Mucosa of descending colon (tissue), 3 donors: ENCODE measurements at regions of chr6 and their contacts with region 1.

Region 1: DNA sequence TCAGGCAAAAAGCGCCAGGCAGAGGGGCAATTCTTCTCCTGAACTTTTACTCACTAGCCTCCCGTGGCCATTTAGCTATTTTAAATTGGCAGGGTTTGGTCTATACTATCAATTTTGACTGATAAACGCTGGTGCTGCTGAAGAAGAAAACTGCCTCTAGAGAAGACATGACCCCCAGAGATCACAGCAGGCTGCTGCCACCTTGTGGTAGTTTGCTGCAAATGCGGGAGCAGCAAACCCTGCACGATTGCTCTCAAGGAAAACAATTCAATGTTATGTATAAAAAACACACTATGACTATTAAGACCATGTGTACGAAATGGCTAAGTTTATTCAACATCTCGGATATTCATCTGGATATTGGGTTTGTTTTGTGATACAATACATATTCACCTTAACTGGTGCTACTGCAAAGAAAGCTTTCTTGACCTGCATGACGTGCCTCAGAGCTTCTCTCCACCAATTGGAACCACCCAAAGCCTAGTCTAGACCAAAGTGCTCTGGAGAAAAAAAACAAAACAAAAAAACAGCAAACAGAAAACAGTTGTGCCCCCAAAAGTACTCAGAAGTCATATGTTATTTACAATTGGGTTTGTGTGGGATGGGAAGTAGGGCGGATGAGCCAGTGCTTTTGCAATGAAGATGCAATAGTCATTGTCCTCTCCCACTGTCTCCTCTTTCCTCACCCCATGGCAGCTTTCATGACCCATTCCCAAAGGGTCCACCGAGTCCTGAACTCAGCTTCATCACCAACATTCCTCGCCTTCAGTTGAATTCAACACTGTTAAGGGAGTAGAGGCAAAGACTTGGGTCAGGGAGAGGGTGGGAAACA is 19.6 kb upstream of the IL17F start:
- DNase-seq: peak in 2 of 3 donors; percentile 66 to 74
- ATAC-seq: peak; percentile 82
- H3K4me3 ChIP-seq: no peak overlapping the region
- H3K4me1 ChIP-seq: no peaks in the 10 kb centered on the region
- CTCF ChIP-seq: peak; percentile 88

Region 2: DNA sequence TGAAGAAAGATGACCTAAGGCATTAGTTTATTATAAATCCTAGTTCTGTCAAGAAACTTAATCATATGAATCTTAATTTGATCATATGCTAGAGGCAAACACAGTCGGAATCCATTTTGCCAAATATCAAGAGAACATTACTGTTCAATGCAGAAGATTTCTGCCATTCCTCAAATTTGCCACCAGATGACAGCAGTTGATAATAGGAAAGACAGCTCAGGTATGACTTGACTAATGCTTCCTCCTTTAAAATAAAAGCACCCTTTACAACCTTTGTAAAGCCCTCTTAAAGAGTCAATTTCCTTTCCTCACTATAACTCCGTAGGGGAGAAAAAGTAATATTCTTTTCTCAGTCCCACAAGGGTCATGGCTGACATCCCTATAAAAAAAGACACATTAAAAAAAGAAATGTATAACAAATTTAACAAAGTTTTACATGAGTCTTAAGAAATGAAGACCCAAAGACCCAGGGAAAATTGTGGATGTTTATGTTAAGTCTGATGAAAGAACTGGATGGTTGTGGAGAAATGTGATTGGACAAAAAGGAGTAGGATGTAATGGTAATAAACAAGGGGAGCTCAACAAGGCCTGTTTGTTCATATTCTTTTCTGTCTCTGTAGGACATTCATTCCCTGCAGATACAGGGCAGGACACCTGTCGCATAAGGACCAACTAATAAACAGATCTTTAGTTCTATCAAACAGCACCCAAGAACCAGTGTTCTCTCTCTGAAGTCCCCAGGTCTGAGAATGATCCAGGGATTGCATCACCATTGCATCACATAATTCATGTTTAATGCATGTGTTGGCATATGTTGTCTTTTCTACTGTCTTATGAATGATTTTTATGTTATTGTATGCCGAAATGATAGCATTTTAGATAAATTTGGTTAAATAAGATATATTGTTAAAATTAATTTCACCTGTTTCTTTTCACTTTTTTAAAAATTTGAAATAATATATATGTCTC is 100.7 kb before region 1 on chr6:
- intact Hi-C with region 1: loop called in 1 of 2 experiments (anchors 10 kb)
- DNase-seq: peak in 1 of 3 donors; percentile 4
- ATAC-seq: peak; percentile 37
- H3K4me3 ChIP-seq: no peak overlapping the region
- H3K4me1 ChIP-seq: no peaks in the 10 kb centered on the region
- CTCF ChIP-seq: no peak

Region 3: GRCh38 chr6:52227495-52227894 is 36.4 kb before region 1 on chr6:
- intact Hi-C with region 1: no loop called
- DNase-seq: no peak
- ATAC-seq: no peak
- H3K4me3 ChIP-seq: no peak overlapping the region
- H3K4me1 ChIP-seq: no peaks in the 10 kb centered on the region
- CTCF ChIP-seq: no peak